CD14-positive monocyte (primary cell): ENCODE measurements at regions of chr7 and their contacts with region 1.

Region 1: GRCh38 chr7:2555121-2556052 is at the start of gene BRAT1:
- DNase-seq: peak; percentile 86 to 91 (median 88)
- H3K4me3 ChIP-seq: peak within 1 kb of the TSS; percentile 61 to 86 (median 66)
- H3K4me3 Mint-ChIP-seq: peak within 1 kb of the TSS; percentile 85 to 90
- H3K27ac ChIP-seq: peak within 1 kb of the TSS; percentile 97
- H3K27ac Mint-ChIP-seq: peak within 1 kb of the TSS; percentile 83 to 97 (median 90)
- H3K4me1 ChIP-seq: peaks cover 52 to 65% of the 10 kb centered on the region in 2 donors
- H3K4me1 Mint-ChIP-seq: peaks cover 51% of the 10 kb centered on the region
- H3K27me3 ChIP-seq: no peaks in the 10 kb centered on the region
- H3K27me3 Mint-ChIP-seq: no peaks in the 10 kb centered on the region
- CTCF ChIP-seq: peak; percentile 59
- polyA plus RNA-seq, gene BRAT1: 31.6 to 34.2 (median 32.5) TPM

Region 2: GRCh38 chr7:1940402-1940786 is 615.0 kb before region 1 on chr7:
- intact Hi-C with region 1: no loop called
- DNase-seq: peak; percentile 87 to 93 (median 89)
- H3K4me3 ChIP-seq: peak overlapping the region; percentile 38 to 71 (median 57)
- H3K4me3 Mint-ChIP-seq: peak overlapping the region; percentile 88 to 94
- H3K27ac ChIP-seq: peak overlapping the region; percentile 62 to 95
- H3K27ac Mint-ChIP-seq: peak overlapping the region; percentile 90 to 99 (median 95)
- H3K4me1 ChIP-seq: peaks cover 46 to 65% of the 10 kb centered on the region in 2 donors
- H3K4me1 Mint-ChIP-seq: peaks cover 63% of the 10 kb centered on the region
- H3K27me3 ChIP-seq: no peaks in the 10 kb centered on the region
- H3K27me3 Mint-ChIP-seq: peaks cover 0 to 8% (median 4%) of the 10 kb centered on the region in 3 donors
- CTCF ChIP-seq: no peak

Region 3: DNA sequence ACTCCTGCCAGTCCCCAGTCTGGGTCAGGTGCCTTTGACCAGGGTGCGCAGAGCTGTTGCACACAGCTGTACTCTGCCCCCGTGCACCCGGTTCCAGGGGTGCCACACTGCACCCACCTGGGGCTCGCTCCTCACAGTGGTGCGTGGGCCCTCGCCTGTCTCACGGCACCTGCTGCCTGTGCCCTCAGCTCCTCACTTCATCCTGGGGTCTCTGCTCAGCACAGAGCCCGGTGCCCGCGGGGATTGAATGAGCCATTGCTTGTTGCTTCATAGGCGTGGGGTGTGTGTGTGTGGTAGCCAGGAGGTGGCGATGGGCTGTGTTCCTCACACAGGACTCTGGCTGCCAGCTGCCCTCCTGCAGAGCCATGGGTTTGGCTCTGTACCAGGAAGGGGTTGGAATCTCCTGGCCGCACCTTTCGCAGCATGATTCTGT is 182.2 kb before region 1 on chr7:
- intact Hi-C with region 1: no loop called
- DNase-seq: no peak
- H3K4me3 ChIP-seq: no peak overlapping the region
- H3K4me3 Mint-ChIP-seq: no peak overlapping the region
- H3K27ac ChIP-seq: no peak overlapping the region
- H3K27ac Mint-ChIP-seq: no peak overlapping the region
- H3K4me1 ChIP-seq: no peaks in the 10 kb centered on the region
- H3K4me1 Mint-ChIP-seq: no peaks in the 10 kb centered on the region
- H3K27me3 ChIP-seq: no peaks in the 10 kb centered on the region
- H3K27me3 Mint-ChIP-seq: peaks cover 0 to 6% (median 0%) of the 10 kb centered on the region in 3 donors
- CTCF ChIP-seq: no peak

Region 4: GRCh38 chr7:2477447-2478398 is 77.7 kb before region 1 on chr7:
- intact Hi-C with region 1: loop called (anchors 10 kb)
- DNase-seq: peak; percentile 72 to 73 (median 72)
- H3K4me3 ChIP-seq: peak overlapping the region in 1 of 3 experiments; percentile 46
- H3K4me3 Mint-ChIP-seq: peak overlapping the region; percentile 20 to 46
- H3K27ac ChIP-seq: no peak overlapping the region
- H3K27ac Mint-ChIP-seq: no peak overlapping the region
- H3K4me1 ChIP-seq: peaks cover 11 to 18% of the 10 kb centered on the region in 2 donors
- H3K4me1 Mint-ChIP-seq: peaks cover 16% of the 10 kb centered on the region
- H3K27me3 ChIP-seq: peaks cover 0 to 4% of the 10 kb centered on the region in 2 donors
- H3K27me3 Mint-ChIP-seq: peaks cover 10 to 26% (median 14%) of the 10 kb centered on the region in 3 donors
- CTCF ChIP-seq: peak; percentile 96

Region 5: DNA sequence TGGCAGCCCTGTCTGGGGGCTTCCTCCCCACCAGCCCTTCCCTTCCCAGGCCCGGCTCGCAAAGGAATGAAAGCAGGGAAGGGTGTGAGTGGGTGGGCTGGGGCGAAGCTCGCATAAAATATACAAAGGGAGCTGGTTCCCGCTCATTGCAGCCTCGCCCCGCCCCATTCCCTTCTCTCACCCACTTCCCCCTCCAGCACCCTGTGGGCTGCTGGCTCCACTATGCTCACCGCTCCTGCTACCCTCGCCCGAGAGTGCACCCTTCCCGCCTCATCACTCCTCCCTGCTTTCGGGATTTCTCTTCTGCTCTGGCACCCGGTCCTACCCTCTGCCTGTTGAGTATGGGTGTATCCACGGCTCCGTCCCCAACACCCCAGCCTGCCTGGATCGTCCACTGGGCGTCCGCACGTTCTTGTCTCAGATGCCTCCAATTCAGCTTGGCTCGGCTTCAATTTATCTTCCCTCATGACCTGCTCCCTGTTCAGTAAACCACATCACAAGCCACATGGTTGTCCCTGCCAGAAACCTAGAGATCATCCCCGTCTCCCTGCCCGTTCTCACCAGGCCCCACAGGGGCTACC is 62.0 kb after region 1 on chr7:
- intact Hi-C with region 1: no loop called
- DNase-seq: no peak
- H3K4me3 ChIP-seq: no peak overlapping the region
- H3K4me3 Mint-ChIP-seq: no peak overlapping the region
- H3K27ac ChIP-seq: no peak overlapping the region
- H3K27ac Mint-ChIP-seq: no peak overlapping the region
- H3K4me1 ChIP-seq: peaks cover 27 to 38% of the 10 kb centered on the region in 2 donors
- H3K4me1 Mint-ChIP-seq: peaks cover 36% of the 10 kb centered on the region
- H3K27me3 ChIP-seq: no peaks in the 10 kb centered on the region
- H3K27me3 Mint-ChIP-seq: peaks cover 3 to 7% (median 6%) of the 10 kb centered on the region in 3 donors
- CTCF ChIP-seq: no peak

Region 6: GRCh38 chr7:2632733-2633537 is 77.5 kb after region 1 on chr7:
- intact Hi-C with region 1: loop called in 1 of 2 experiments (anchors 5 kb)
- DNase-seq: peak; percentile 61 to 74 (median 73)
- H3K4me3 ChIP-seq: peak overlapping the region; percentile 79 to 96 (median 91)
- H3K4me3 Mint-ChIP-seq: peak overlapping the region; percentile 97
- H3K27ac ChIP-seq: peak overlapping the region; percentile 89 to 96
- H3K27ac Mint-ChIP-seq: peak overlapping the region; percentile 94 to 98 (median 98)
- H3K4me1 ChIP-seq: peaks cover 51 to 54% of the 10 kb centered on the region in 2 donors
- H3K4me1 Mint-ChIP-seq: peaks cover 37% of the 10 kb centered on the region
- H3K27me3 ChIP-seq: no peaks in the 10 kb centered on the region
- H3K27me3 Mint-ChIP-seq: peaks cover 1 to 4% (median 1%) of the 10 kb centered on the region in 3 donors
- CTCF ChIP-seq: no peak